Activated T-helper 2 cell treated with anti-CD3 and anti-CD28 coated beads, Interferon-gamma antibody, Interleukin-2, Interleukin-4, amounts not matched to agents 10 μg/mL and 5 μg/mL and 100 μg/mL, durations not matched to agents 14 hours and 24 hours and 36 hours (primary cell): ENCODE measurements at regions of chr2 and their contacts with region 1.

Region 1: GRCh38 chr2:27281855-27282559 is at the start of gene TRIM54:
- DNase-seq: no peak
- H3K4me3 Mint-ChIP-seq: no peak within 1 kb of the TSS
- H3K27ac Mint-ChIP-seq: no peak within 1 kb of the TSS
- H3K4me1 Mint-ChIP-seq: peaks cover 16% of the 10 kb centered on the region
- H3K27me3 Mint-ChIP-seq: peaks cover 32% of the 10 kb centered on the region
- total RNA-seq, gene TRIM54: 0.21 and 0.25 TPM in 2 replicates

Region 2: GRCh38 chr2:26968001-26968400 is 314.0 kb before region 1 on chr2:
- intact Hi-C with region 1: loop called (anchors 5 kb)
- DNase-seq: no peak
- H3K4me3 Mint-ChIP-seq: no peak overlapping the region
- H3K27ac Mint-ChIP-seq: no peak overlapping the region
- H3K4me1 Mint-ChIP-seq: peaks cover 15% of the 10 kb centered on the region
- H3K27me3 Mint-ChIP-seq: peaks cover 42% of the 10 kb centered on the region

Region 3: GRCh38 chr2:27095745-27096651 is 186.0 kb before region 1 on chr2:
- intact Hi-C with region 1: loop called (anchors 2 kb)
- DNase-seq: no peak
- H3K4me3 Mint-ChIP-seq: peak overlapping the region; percentile 51
- H3K27ac Mint-ChIP-seq: peak overlapping the region; percentile 24
- H3K4me1 Mint-ChIP-seq: peaks cover 9% of the 10 kb centered on the region
- H3K27me3 Mint-ChIP-seq: no peaks in the 10 kb centered on the region

Region 4: DNA sequence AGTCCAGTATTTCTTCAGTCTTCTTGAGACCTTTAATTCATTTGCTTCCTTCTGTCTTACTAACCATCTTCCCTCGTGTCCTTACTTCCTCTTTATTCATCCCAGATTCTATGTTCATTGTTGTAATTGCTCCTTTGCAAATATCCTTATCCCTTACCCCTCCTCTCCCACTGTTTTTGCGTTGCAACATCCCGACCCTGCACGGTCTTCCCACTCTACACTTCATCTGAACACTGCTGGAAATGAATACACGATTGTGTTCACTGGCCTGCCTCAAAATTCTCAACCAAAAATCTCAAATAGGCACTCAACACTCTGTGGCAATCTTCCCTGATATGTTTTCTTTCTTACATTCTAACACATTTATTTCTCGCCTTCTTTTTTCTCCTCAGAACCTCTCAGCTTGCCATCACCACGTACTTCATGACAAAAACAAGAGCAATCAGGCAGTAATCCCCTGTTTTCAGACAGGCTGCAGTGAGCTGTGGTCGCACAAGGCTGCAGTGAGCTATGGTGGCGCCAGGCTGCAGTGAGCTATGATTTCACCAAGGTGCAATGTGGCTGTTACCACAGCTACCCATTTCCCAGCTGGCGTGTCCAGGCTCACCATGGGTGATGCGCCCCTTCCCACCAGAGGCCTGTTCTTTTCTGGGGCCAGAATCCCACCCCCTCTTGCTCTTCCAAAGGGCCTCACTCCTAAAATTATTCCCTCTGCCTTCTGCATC is 107.5 kb before region 1 on chr2:
- intact Hi-C with region 1: no loop called
- DNase-seq: no peak
- H3K4me3 Mint-ChIP-seq: no peak overlapping the region
- H3K27ac Mint-ChIP-seq: no peak overlapping the region
- H3K4me1 Mint-ChIP-seq: peaks cover 1% of the 10 kb centered on the region
- H3K27me3 Mint-ChIP-seq: peaks cover 39% of the 10 kb centered on the region

Region 5: GRCh38 chr2:27249891-27250651 is 31.9 kb before region 1 on chr2:
- intact Hi-C with region 1: loop called (anchors 1 kb)
- DNase-seq: peak; percentile 47
- H3K4me3 Mint-ChIP-seq: no peak overlapping the region
- H3K27ac Mint-ChIP-seq: no peak overlapping the region
- H3K4me1 Mint-ChIP-seq: no peaks in the 10 kb centered on the region
- H3K27me3 Mint-ChIP-seq: peaks cover 11% of the 10 kb centered on the region

Region 6: GRCh38 chr2:27264753-27265535 is 17.1 kb before region 1 on chr2:
- intact Hi-C with region 1: loop called (anchors 1 kb)
- DNase-seq: peak; percentile 24
- H3K4me3 Mint-ChIP-seq: peak overlapping the region; percentile 60
- H3K27ac Mint-ChIP-seq: no peak overlapping the region
- H3K4me1 Mint-ChIP-seq: peaks cover 18% of the 10 kb centered on the region
- H3K27me3 Mint-ChIP-seq: peaks cover 42% of the 10 kb centered on the region

Region 7: GRCh38 chr2:27303093-27304025 is 21.4 kb after region 1 on chr2:
- intact Hi-C with region 1: loop called (anchors 2 kb)
- DNase-seq: peak; percentile 31
- H3K4me3 Mint-ChIP-seq: peak overlapping the region; percentile 64
- H3K27ac Mint-ChIP-seq: peak overlapping the region; percentile 5
- H3K4me1 Mint-ChIP-seq: peaks cover 5% of the 10 kb centered on the region
- H3K27me3 Mint-ChIP-seq: peaks cover 23% of the 10 kb centered on the region

Region 8: DNA sequence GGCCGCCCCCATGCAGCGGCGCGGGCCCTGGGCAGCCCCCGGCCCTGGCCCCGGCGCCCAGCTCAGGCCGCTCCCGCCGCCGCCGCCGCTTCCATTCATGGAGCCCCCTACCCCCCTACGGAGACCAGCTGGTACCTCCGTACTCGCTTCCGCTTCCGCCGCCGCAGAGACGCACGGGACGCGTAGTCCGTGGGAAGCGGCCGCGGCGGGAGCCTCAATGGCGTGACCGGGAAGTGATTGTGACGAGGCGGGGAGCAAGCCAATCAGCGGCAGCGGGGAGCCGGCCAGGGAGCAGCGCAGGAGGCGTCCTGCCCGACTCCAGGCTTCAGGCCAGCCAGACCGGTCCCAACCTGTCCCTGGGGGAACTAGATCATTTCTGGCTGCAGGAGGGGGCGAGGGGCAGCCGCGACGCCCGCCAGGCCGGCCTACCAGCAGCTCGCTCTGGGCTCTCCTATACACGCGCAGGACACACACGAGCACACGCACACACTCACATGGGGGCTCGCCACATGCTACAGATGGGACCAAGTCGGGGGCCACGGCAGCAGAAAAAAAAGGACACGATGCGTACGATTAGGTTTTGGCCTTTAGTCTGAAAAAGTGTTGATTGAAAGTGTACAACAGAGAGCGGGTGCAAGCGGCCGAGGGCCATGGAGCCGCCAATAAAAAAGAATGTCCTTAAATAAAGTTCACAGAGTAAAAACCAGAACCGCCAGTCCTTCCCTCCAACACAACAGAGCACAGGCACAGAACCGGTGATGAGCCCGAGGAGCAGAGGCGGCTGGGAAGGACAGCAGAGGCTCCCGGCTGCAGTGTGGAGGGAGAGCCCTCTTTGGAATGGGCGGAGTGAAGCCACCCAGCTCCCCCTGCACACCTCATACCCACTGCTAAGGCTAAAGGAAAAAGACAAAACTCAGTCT is 98.9 kb after region 1 on chr2 and contains the start of gene ZNF513:
- intact Hi-C with region 1: no loop called
- DNase-seq: peak; percentile 84
- H3K4me3 Mint-ChIP-seq: peak within 1 kb of the TSS; percentile 86
- H3K27ac Mint-ChIP-seq: peak within 1 kb of the TSS; percentile 92
- H3K4me1 Mint-ChIP-seq: peaks cover 18% of the 10 kb centered on the region
- H3K27me3 Mint-ChIP-seq: no peaks in the 10 kb centered on the region
- total RNA-seq, gene ZNF513: 11.7 and 12.8 TPM in 2 replicates

Region 9: GRCh38 chr2:27890146-27890923 is 608.3 kb after region 1 on chr2 and contains the starts of genes BABAM2 and RBKS:
- intact Hi-C with region 1: no loop called
- DNase-seq: peak; percentile 88
- H3K4me3 Mint-ChIP-seq: peak within 1 kb of the TSS; percentile 94
- H3K27ac Mint-ChIP-seq: peak within 1 kb of the TSS; percentile 98
- H3K4me1 Mint-ChIP-seq: peaks cover 53% of the 10 kb centered on the region
- H3K27me3 Mint-ChIP-seq: no peaks in the 10 kb centered on the region
- total RNA-seq, gene BABAM2: 49.0 and 54.5 TPM in 2 replicates
- total RNA-seq, gene RBKS: 1.8 and 3.0 TPM in 2 replicates